Cardiac septum (tissue), 1 donor: ENCODE measurements at regions of chr1 and their contacts with region 1.

Region 1: GRCh38 chr1:26999440-26999987 is 6.0 kb downstream of the TRNP1 start:
- DNase-seq: no peak

Region 2: GRCh38 chr1:26516987-26517765 is 482.3 kb before region 1 on chr1:
- intact Hi-C with region 1: no loop called
- DNase-seq: no peak

Region 3: GRCh38 chr1:27031235-27032118 is 32.0 kb after region 1 on chr1:
- intact Hi-C with region 1: loop called (anchors 5 kb)
- DNase-seq: peak; percentile 91

Region 4: GRCh38 chr1:27044613-27045151 is 45.2 kb after region 1 on chr1:
- intact Hi-C with region 1: loop called (anchors 2 kb)
- DNase-seq: peak; percentile 95